ENCODE measurements at regions of chr18 and their contacts with region 1.

Region 1: DNA sequence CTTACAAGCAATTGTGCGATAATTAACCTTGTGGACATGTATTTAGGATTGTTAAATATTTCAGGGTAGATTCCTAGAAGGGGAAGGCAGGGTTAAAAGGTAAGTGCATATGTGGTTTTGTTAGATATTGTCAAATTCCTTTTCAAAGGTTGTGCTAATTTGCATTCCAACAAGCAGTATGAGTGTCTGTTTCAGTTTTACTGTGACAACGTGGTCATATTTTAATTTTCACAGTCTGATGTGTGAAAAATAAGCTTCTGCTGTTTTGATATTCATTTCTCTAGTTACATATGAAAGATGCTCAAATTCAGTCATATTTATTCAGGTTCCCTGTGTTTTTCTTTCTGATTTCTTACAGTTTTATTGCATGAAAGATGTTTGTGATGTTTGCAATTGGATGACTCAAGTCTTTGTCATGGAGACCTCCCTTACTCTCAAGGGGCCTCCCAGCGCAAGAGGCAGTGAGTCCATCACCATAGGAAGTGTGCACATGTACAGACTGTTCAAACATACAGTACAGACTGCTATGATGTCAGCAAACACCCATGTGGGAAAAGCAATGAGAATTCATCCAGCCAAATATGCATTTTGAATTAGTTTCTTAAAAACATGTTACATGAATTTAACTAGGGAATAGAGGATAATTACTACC is 310.8 kb downstream of the GALR1 start:
- DNase-seq: no peak
- ATAC-seq: no peak
- H3K4me3 ChIP-seq: no peak overlapping the region
- H3K27ac ChIP-seq: no peak overlapping the region
- H3K4me1 ChIP-seq: no peaks in the 10 kb centered on the region
- H3K27me3 ChIP-seq: no peaks in the 10 kb centered on the region
- CTCF ChIP-seq: no peak
- EP300 ChIP-seq: no peak
- POLR2A ChIP-seq: no peak
- RAD21 ChIP-seq: no peak

Region 2: GRCh38 chr18:76459687-76460350 is 1100.6 kb before region 1 on chr18:
- CTCF ChIA-PET with region 1: no interaction called
- POLR2A ChIA-PET with region 1: no interaction called
- RAD21 ChIA-PET with region 1: no interaction called
- SMC1A ChIA-PET with region 1: no interaction called
- in situ Hi-C with region 1: no loop called
- intact Hi-C with region 1: no loop called
- DNase-seq: no peak
- ATAC-seq: no peak
- H3K4me3 ChIP-seq: no peak overlapping the region
- H3K27ac ChIP-seq: no peak overlapping the region
- H3K4me1 ChIP-seq: peaks cover 7% of the 10 kb centered on the region
- H3K27me3 ChIP-seq: no peaks in the 10 kb centered on the region
- CTCF ChIP-seq: no peak
- EP300 ChIP-seq: no peak
- POLR2A ChIP-seq: no peak
- RAD21 ChIP-seq: no peak

Region 3: GRCh38 chr18:77547757-77548156 is 12.7 kb before region 1 on chr18:
- CTCF ChIA-PET with region 1: no interaction called
- POLR2A ChIA-PET with region 1: no interaction called
- RAD21 ChIA-PET with region 1: no interaction called
- SMC1A ChIA-PET with region 1: no interaction called
- in situ Hi-C with region 1: no loop called
- intact Hi-C with region 1: loop called (anchors 1 kb)
- DNase-seq: no peak
- ATAC-seq: no peak
- H3K4me3 ChIP-seq: no peak overlapping the region
- H3K27ac ChIP-seq: no peak overlapping the region
- H3K4me1 ChIP-seq: no peaks in the 10 kb centered on the region
- H3K27me3 ChIP-seq: no peaks in the 10 kb centered on the region
- CTCF ChIP-seq: no peak
- EP300 ChIP-seq: no peak
- POLR2A ChIP-seq: no peak
- RAD21 ChIP-seq: no peak

Measured in GM12878 (cell line).